ENCODE measurements at regions of chr2 and their contacts with region 1.

Region 1: DNA sequence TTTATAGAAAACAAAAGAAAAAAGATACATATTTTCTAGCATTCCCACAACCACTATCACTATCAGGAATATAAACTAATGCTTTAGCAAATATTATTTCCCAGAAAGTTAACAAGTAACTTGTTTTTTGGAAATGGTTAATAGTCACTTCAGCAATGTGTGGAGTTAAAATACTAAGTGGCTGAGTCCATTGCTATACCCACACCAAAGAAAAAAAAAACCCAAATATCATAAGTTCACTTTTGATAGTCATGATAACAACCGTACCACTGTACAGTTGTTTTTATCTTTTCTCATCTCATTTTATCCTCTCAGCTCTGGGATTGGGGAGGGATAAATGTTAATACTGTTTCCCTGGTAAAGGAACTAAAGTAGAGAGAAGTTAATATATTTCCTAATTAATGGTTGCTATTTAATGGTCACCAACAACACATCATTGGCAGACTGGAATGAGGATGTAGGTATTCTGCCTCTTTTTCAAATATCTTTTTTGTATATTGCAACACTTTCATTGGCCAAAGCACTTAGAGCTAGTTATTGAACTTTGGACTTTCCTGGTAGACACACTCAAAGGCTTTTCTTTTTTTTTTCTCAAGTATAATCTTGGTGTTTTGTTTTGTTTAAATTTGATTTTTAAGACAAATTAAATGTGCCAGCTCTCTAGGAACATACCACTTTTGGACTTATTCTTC is 18.4 kb upstream of the KANSL1L start:
- DNase-seq: no peak
- ATAC-seq: peak; percentile 82 to 90
- H3K4me3 ChIP-seq: no peak overlapping the region
- H3K27ac ChIP-seq: no peak overlapping the region
- H3K4me1 ChIP-seq: no peaks in the 10 kb centered on the region
- H3K27me3 ChIP-seq: no peaks in the 10 kb centered on the region
- CTCF ChIP-seq: no peak

Region 2: GRCh38 chr2:209549589-209549988 is 640.0 kb before region 1 on chr2:
- intact Hi-C with region 1: no loop called
- DNase-seq: no peak
- ATAC-seq: no peak
- H3K4me3 ChIP-seq: no peak overlapping the region
- H3K27ac ChIP-seq: no peak overlapping the region
- H3K4me1 ChIP-seq: no peaks in the 10 kb centered on the region
- H3K27me3 ChIP-seq: no peaks in the 10 kb centered on the region
- CTCF ChIP-seq: no peak

Region 3: GRCh38 chr2:209977386-209978239 is 212.0 kb before region 1 on chr2:
- intact Hi-C with region 1: loop called (anchors 5 kb)
- DNase-seq: no peak
- ATAC-seq: peak in 1 of 2 donors; percentile 56
- H3K4me3 ChIP-seq: no peak overlapping the region
- H3K27ac ChIP-seq: no peak overlapping the region
- H3K4me1 ChIP-seq: no peaks in the 10 kb centered on the region
- H3K27me3 ChIP-seq: no peaks in the 10 kb centered on the region
- CTCF ChIP-seq: peak; percentile 56